IMR-90 (cell line): ENCODE measurements at regions of chr22 and their contacts with region 1.

Region 1: DNA sequence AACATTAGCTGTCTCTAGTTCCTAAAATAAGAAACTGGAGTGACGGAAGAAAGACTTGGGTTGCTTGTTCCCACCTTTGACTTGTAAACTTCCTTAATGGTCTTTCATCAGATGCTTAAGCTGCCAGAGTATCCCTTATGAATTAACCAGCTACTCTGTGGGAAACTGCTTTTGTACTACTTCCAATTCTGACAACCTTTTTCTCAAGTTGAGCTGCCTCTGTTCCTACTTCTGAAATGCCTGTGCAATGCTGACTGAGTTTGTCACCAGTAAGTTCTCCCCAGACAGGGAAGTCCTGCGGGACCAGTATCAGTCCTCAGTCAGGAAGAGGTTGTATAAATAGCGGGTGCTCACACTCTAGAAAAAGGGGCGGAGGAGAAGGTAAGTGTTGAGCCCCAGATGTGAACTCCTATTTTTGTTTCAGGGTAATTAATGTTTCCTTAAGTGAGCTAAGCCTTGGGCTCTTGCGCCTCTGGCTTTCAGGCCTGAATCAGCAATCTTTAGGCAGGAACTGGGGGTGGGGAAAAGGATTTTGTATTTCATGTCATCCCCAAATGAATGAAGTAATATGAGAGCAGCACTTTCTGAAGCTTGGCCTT is 67.2 kb downstream of the CECR2 start:
- DNase-seq: no peak
- ATAC-seq: no peak
- H3K4me3 ChIP-seq: no peak overlapping the region
- H3K27ac ChIP-seq: no peak overlapping the region
- H3K4me1 ChIP-seq: no peaks in the 10 kb centered on the region
- H3K27me3 ChIP-seq: peaks cover 7% of the 10 kb centered on the region
- CTCF ChIP-seq: no peak
- POLR2A ChIP-seq: no peak
- RAD21 ChIP-seq: no peak

Region 2: GRCh38 chr22:17369439-17370025 is 66.9 kb before region 1 on chr22 and contains the start of gene CECR2:
- CTCF ChIA-PET with region 1: no interaction called
- POLR2A ChIA-PET with region 1: no interaction called
- dilution Hi-C with region 1: no loop called
- in situ Hi-C with region 1: no loop called
- intact Hi-C with region 1: loop called (anchors 10 kb)
- DNase-seq: no peak
- ATAC-seq: peak; percentile 35; the same call in 1 of the 2 replicates
- H3K4me3 ChIP-seq: no peak within 1 kb of the TSS
- H3K27ac ChIP-seq: no peak within 1 kb of the TSS
- H3K4me1 ChIP-seq: peaks cover 2% of the 10 kb centered on the region; the same call in 1 of the 2 replicates
- H3K27me3 ChIP-seq: peaks cover 43% of the 10 kb centered on the region
- CTCF ChIP-seq: no peak
- POLR2A ChIP-seq: no peak
- RAD21 ChIP-seq: no peak
- total RNA-seq, gene CECR2: not detected in 2 replicates

Region 3: GRCh38 chr22:17396549-17396948 is 39.9 kb before region 1 on chr22:
- CTCF ChIA-PET with region 1: no interaction called
- POLR2A ChIA-PET with region 1: no interaction called
- dilution Hi-C with region 1: no loop called
- in situ Hi-C with region 1: no loop called
- intact Hi-C with region 1: no loop called
- DNase-seq: no peak
- ATAC-seq: no peak
- H3K4me3 ChIP-seq: no peak overlapping the region
- H3K27ac ChIP-seq: no peak overlapping the region
- H3K4me1 ChIP-seq: no peaks in the 10 kb centered on the region
- H3K27me3 ChIP-seq: no peaks in the 10 kb centered on the region
- CTCF ChIP-seq: no peak
- POLR2A ChIP-seq: no peak
- RAD21 ChIP-seq: no peak